Heart left ventricle (tissue), 16 donors: ENCODE measurements at regions of chr16 and their contacts with region 1.

Region 1: DNA sequence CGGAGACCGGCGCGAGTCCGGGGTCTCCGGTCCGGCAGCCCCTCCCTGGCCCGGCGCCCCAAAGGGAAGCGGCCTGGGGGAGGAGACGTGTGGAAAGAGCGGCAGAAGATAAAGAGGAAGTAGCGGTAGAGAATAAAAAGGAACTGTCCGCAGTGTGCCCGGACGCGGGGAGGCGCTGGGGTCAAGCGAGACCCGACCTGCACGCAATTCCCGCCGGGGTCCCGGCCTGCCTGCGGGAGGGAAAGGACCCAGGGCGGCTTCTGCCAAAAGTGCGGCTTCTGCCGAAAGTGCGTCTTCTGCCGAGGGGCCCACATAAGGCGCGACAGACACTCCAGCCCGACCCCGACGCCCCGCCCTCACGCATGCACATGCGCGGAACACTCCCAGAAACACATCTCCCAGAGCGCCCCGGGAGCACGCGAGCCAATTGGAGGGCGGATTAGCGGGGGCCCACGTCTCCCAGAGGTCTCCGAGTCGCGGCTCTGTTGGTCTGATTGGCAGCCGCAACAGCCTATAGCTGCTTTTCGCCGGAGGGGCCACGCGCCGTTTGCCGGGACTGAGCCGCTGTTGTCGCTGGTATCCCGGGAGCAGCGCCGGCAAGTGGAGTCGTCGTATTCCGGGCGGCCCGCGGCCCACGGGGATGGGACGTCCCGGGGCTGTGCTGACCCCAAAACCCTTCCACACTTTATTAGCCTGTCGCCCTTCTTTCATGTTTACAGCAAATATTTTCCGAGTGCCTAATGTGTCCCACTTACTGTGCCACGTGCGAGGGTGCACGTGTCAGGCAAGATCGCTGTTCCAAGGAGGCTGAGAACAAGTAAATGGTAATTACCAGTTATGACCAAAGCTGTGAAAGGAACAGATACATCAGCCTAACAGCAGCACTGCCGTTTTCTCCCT is 8.0 kb upstream of the MEFV start:
- DNase-seq: peak; percentile 97 to 100 (median 98)
- ATAC-seq: peak; percentile 95 to 97 (median 96)
- H3K4me3 ChIP-seq: peak overlapping the region; percentile 37 to 91 (median 81)
- H3K27ac ChIP-seq: peak overlapping the region; percentile 93 to 100 (median 99)
- H3K4me1 ChIP-seq: peaks cover 0 to 34% (median 9%) of the 10 kb centered on the region in 12 donors
- H3K27me3 ChIP-seq: no peaks in the 10 kb centered on the region
- CTCF ChIP-seq: peak in 8 of 12 donors; percentile 7 to 55 (median 29)
- POLR2A ChIP-seq: peak; percentile 20 to 80

Region 2: GRCh38 chr16:3150346-3151218 is 113.8 kb before region 1 on chr16:
- intact Hi-C with region 1: loop called in 1 of 10 experiments (anchors 5 kb)
- DNase-seq: peak; percentile 94 to 96 (median 95)
- ATAC-seq: peak; percentile 91 to 94 (median 94)
- H3K4me3 ChIP-seq: peak overlapping the region; percentile 24 to 82 (median 71)
- H3K27ac ChIP-seq: peak overlapping the region; percentile 51 to 94 (median 88)
- H3K4me1 ChIP-seq: peaks cover 0 to 32% (median 17%) of the 10 kb centered on the region in 12 donors
- H3K27me3 ChIP-seq: no peaks in the 10 kb centered on the region
- CTCF ChIP-seq: peak in 1 of 12 donors; percentile 8
- POLR2A ChIP-seq: peak in 1 of 2 donors; percentile 49

Region 3: DNA sequence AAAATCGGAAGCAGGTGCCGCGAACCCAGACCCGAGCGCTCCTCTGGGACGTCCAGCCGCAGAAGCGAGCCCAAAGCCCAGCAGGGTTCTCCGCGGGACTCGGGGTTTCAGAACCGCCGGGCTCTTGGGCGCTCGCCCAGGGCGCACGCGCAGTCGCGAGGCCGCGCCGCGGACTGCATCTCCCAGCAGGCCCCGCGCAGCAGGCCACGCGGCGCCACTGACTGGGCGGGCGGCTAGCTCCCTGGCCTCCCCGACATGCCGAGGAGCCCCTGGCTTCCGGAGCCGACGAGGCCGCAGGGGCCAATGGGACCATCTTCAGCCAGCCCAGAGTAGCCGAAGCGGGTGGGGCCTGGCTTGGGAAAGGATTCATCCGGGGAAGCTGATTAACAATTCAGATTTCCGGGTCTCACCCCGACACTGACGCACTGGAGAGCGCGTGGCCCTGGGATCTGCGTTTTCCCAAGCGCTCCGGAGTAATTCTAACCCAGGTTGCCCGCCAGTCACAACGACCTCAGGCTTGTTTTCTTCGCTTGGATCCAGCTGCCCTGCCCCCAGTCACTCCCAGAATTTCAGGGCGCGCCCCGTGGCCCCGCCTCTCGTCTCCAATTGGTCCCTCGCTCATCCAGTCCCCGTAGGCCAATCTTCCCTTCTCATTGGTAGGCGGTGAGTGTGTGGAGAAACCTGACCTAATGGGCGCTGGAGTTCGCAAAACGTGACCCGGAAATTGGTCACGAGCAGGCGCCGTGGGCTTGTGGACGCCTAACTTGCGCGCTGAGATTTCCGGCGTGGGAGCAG is 18.5 kb after region 1 on chr16 and contains the start of gene ZNF263:
- intact Hi-C with region 1: loop called in 5 of 10 experiments (anchors 1 to 2 kb)
- DNase-seq: peak; percentile 96 to 98 (median 96)
- ATAC-seq: peak; percentile 96 to 98 (median 96)
- H3K4me3 ChIP-seq: peak within 1 kb of the TSS; percentile 75 to 99 (median 94)
- H3K27ac ChIP-seq: peak within 1 kb of the TSS; percentile 98 to 100 (median 99)
- H3K4me1 ChIP-seq: peaks cover 0 to 30% (median 24%) of the 10 kb centered on the region in 12 donors
- H3K27me3 ChIP-seq: no peaks in the 10 kb centered on the region
- CTCF ChIP-seq: no peak
- POLR2A ChIP-seq: no peak
- total RNA-seq, gene ZNF263: 6.4 to 18.7 (median 9.6) TPM

Region 4: GRCh38 chr16:3364774-3365427 is 100.5 kb after region 1 on chr16:
- intact Hi-C with region 1: loop called in 1 of 10 experiments (anchors 10 kb)
- DNase-seq: peak; percentile 87 to 97 (median 92)
- ATAC-seq: peak; percentile 99 to 100 (median 99)
- H3K4me3 ChIP-seq: peak overlapping the region; percentile 40 to 90 (median 62)
- H3K27ac ChIP-seq: peak overlapping the region; percentile 79 to 94 (median 88)
- H3K4me1 ChIP-seq: peaks cover 0 to 8% (median 0%) of the 10 kb centered on the region in 12 donors
- H3K27me3 ChIP-seq: peaks cover 0 to 9% (median 0%) of the 10 kb centered on the region in 9 donors
- CTCF ChIP-seq: no peak
- POLR2A ChIP-seq: peak in 1 of 2 donors; percentile 41

Region 5: DNA sequence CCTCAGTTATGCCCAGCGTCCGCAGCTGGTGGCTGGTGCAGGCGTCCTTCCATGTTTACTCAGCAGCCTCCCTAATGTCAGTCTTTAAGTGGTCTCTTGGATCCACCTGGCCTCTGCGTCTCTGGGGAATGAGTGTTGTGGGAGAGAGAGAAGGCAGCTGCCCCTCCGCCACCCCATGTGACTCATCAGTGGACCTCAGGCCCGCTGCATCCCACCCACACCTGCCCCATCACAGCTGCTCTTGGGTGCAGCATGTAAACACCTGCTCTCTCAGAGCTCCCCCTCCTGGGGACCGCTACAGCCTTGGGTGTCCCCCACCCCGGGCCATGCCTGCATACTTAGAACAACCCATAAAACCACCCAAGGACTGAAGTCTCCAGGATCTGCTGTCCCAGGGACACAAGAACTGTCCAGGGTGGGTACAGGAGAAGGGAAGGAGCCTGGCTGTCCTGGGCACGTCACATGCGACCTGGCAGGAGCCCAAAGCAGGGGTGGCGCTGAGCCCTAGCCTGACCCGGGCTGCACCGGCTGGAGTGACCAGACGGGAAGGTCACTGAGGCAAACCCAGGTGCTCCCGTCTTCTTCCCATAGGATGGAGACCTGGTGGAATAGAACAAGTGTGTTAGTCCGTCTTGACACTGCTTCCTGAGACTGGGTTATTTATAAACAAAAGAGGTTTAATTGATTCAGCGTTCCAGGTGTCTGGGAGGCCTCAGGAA is 226.7 kb after region 1 on chr16:
- intact Hi-C with region 1: loop called in 2 of 10 experiments (anchors 5 to 10 kb)
- DNase-seq: peak in 2 of 5 donors; percentile 22 to 58
- ATAC-seq: peak in 3 of 4 donors; percentile 7 to 22 (median 21)
- H3K4me3 ChIP-seq: no peak overlapping the region
- H3K27ac ChIP-seq: no peak overlapping the region
- H3K4me1 ChIP-seq: peaks cover 0 to 13% (median 1%) of the 10 kb centered on the region in 12 donors
- H3K27me3 ChIP-seq: no peaks in the 10 kb centered on the region
- CTCF ChIP-seq: peak in 2 of 12 donors; percentile 18 to 21
- POLR2A ChIP-seq: no peak

Region 6: GRCh38 chr16:3509470-3509928 is 245.1 kb after region 1 on chr16:
- intact Hi-C with region 1: loop called in 5 of 10 experiments (anchors 5 to 10 kb)
- DNase-seq: no peak
- ATAC-seq: no peak
- H3K4me3 ChIP-seq: no peak overlapping the region
- H3K27ac ChIP-seq: peak overlapping the region in 1 of 12 donors; percentile 42
- H3K4me1 ChIP-seq: peaks cover 0 to 10% (median 0%) of the 10 kb centered on the region in 12 donors
- H3K27me3 ChIP-seq: no peaks in the 10 kb centered on the region
- CTCF ChIP-seq: no peak
- POLR2A ChIP-seq: no peak